T-cell (primary cell): ENCODE measurements at regions of chr3 and their contacts with region 1.

Region 1: DNA sequence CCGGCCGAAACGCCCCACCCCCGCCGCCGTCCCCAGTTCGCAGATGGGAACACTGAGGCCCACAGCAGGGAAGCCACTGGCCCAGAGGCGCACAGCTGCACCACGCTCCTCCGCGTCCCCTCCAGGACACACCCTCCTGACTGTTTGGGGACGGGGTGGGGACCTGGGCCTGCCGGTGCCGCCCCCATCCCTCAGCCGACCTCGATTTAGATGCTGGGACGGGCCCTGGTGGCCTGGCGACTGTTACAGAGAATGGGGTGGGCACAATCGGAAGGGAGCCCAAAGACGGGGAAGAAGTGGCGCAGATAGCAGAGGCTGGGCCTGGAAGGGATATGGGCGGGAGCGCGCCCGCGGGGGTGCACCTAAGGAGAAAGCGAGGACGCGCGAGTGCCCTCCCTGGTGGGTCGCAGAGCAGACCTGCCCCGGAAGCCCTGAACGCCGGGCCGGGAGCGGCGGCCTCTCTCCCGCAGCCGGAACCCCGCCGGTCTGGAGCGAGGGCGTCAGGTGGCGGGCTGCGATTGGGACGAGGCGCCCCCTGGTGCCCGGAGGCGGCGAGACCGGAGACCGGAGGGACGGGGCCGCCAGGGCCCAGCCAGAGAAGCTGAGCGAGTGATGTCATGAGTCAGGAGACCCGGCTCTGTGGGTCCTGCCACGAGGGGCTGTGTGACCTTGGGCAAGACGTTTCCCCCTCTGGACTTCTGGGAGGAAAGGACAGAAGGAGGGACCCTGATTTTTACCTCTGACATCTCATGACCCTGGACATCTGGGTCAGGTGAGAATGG is 78.4 kb downstream of the IQSEC1 start:
- DNase-seq: peak; percentile 64 to 91 (median 80)
- ATAC-seq: peak; percentile 83 to 93 (median 88)
- H3K4me3 ChIP-seq: peak overlapping the region; percentile 68 to 80
- H3K4me3 Mint-ChIP-seq: peak overlapping the region; percentile 92 to 93 (median 93)
- H3K27ac ChIP-seq: peak overlapping the region; percentile 64
- H3K27ac Mint-ChIP-seq: peak overlapping the region; percentile 87 to 94
- H3K4me1 ChIP-seq: peaks cover 0 to 61% of the 10 kb centered on the region in 2 experiments
- H3K4me1 Mint-ChIP-seq: peaks cover 53 to 74% (median 66%) of the 10 kb centered on the region in 3 donors
- H3K27me3 ChIP-seq: no peaks in the 10 kb centered on the region
- H3K27me3 Mint-ChIP-seq: no peaks in the 10 kb centered on the region

Region 2: DNA sequence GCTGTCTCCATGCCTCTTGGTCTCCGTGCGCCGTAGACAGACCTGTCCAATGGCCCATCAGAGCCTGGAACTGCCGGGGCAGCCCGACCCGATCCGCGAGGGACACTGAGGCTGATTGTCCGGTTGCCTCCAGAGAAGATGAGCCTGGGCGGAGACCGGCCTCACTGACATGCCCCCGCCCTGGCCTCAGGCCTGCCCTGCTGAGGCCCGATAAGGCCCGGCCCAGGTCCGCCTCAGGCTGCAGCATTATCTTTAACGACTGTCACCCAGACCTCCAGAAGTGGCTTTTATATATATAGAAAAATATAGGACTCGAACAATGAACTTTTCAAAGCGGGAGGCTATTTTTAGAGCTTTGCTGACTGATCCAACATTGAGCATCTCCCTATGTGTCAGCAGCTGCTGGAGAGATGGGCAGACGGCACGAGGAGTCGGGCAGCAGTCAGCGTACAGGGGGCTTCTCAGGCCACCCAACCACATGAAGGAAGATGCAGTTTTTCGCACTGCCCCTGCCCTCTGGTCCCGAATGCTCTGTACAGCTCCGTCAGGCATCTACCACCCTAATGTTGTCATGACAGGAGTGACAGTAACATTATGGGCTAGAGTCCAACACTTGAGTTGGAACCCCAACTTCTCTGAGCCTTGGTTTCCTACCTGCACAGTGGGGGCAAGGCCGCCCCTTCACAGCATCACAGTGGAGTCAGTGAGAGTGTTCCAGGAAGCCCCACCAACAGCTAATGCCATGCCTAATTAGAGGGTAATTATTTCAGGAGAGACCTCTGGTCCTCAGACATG is 41.4 kb before region 1 on chr3:
- CTCF ChIA-PET with region 1: no interaction called
- POLR2A ChIA-PET with region 1: no interaction called
- DNase-seq: no peak
- ATAC-seq: no peak
- H3K4me3 ChIP-seq: no peak overlapping the region
- H3K4me3 Mint-ChIP-seq: no peak overlapping the region
- H3K27ac ChIP-seq: no peak overlapping the region
- H3K27ac Mint-ChIP-seq: peak overlapping the region in 1 of 2 donors; percentile 12
- H3K4me1 ChIP-seq: peaks cover 0 to 99% of the 10 kb centered on the region in 2 experiments
- H3K4me1 Mint-ChIP-seq: peaks cover 69 to 82% (median 73%) of the 10 kb centered on the region in 3 donors
- H3K27me3 ChIP-seq: no peaks in the 10 kb centered on the region
- H3K27me3 Mint-ChIP-seq: no peaks in the 10 kb centered on the region

Region 3: GRCh38 chr3:12984023-12984823 is 10.6 kb before region 1 on chr3:
- CTCF ChIA-PET with region 1: interaction called, 3 to 10 read pairs
- POLR2A ChIA-PET with region 1: no interaction called
- DNase-seq: peak in 33 of 35 experiments; percentile 27 to 73 (median 49)
- ATAC-seq: peak; percentile 77 to 85 (median 78)
- H3K4me3 ChIP-seq: no peak overlapping the region
- H3K4me3 Mint-ChIP-seq: no peak overlapping the region
- H3K27ac ChIP-seq: no peak overlapping the region
- H3K27ac Mint-ChIP-seq: peak overlapping the region; percentile 19 to 52
- H3K4me1 ChIP-seq: peaks cover 6 to 67% of the 10 kb centered on the region in 2 experiments
- H3K4me1 Mint-ChIP-seq: peaks cover 72 to 77% (median 73%) of the 10 kb centered on the region in 3 donors
- H3K27me3 ChIP-seq: no peaks in the 10 kb centered on the region
- H3K27me3 Mint-ChIP-seq: no peaks in the 10 kb centered on the region

Region 4: DNA sequence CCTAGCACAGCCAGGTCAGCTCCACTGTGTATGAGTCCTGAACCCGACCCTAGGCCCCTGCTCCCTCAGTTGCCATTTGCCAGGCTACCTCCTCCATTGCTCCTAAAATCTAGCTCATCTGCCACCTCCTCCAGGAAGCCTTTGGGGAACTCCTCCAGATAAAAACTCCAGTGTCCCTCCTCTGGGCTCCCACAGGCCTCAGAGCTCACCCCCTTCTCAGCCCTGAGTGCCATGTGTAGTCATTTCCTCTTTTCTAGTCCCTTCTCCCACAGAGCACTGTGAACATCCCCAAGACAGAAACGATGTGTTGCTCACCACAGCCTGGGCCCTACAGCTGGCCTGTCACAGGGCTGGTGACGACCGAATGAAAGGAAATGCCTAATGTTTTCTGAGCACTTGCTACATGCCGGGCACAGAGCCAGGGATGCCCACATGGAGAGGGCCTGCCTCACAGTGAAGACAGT is 17.5 kb after region 1 on chr3:
- CTCF ChIA-PET with region 1: interaction called in 1 of 2 experiments, 11 read pairs
- POLR2A ChIA-PET with region 1: interaction called in 1 of 2 experiments, 3 read pairs
- DNase-seq: peak in 27 of 35 experiments; percentile 23 to 74 (median 36)
- ATAC-seq: no peak
- H3K4me3 ChIP-seq: peak overlapping the region in 1 of 2 donors; percentile 14
- H3K4me3 Mint-ChIP-seq: peak overlapping the region; percentile 62 to 89 (median 64)
- H3K27ac ChIP-seq: peak overlapping the region; percentile 100
- H3K27ac Mint-ChIP-seq: peak overlapping the region; percentile 99
- H3K4me1 ChIP-seq: peaks cover 75 to 100% of the 10 kb centered on the region in 2 experiments
- H3K4me1 Mint-ChIP-seq: peaks cover 81 to 90% (median 84%) of the 10 kb centered on the region in 3 donors
- H3K27me3 ChIP-seq: no peaks in the 10 kb centered on the region
- H3K27me3 Mint-ChIP-seq: no peaks in the 10 kb centered on the region

Region 5: GRCh38 chr3:13141991-13142412 is 147.2 kb after region 1 on chr3:
- CTCF ChIA-PET with region 1: no interaction called
- POLR2A ChIA-PET with region 1: no interaction called
- DNase-seq: peak in 8 of 35 experiments; percentile 3 to 20 (median 9)
- ATAC-seq: peak in 2 of 4 experiments; percentile 19 to 47
- H3K4me3 ChIP-seq: no peak overlapping the region
- H3K4me3 Mint-ChIP-seq: no peak overlapping the region
- H3K27ac ChIP-seq: no peak overlapping the region
- H3K27ac Mint-ChIP-seq: no peak overlapping the region
- H3K4me1 ChIP-seq: no peaks in the 10 kb centered on the region
- H3K4me1 Mint-ChIP-seq: no peaks in the 10 kb centered on the region
- H3K27me3 ChIP-seq: peaks cover 0 to 47% of the 10 kb centered on the region in 2 experiments
- H3K27me3 Mint-ChIP-seq: peaks cover 20 to 24% of the 10 kb centered on the region in 2 donors

Region 6: DNA sequence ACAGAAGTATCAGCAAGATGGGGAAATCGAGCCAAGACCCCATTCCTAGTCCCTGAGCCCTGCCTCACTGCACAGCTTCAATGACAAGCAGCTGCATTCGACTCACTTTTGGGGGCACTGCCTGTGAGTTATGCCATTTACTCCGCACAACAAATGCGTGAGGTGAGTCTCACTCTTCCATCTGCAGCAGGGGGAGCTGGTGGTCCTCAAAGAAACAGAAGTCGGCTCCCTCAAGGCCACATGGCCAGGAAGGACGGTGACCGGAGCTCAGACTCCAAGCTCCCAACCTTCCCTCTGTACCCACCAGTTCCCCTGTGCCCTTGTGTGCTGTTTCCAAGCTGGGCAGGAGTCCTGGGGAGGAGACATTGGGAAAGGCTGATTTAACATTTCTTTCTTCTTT is 206.1 kb after region 1 on chr3:
- CTCF ChIA-PET with region 1: no interaction called
- POLR2A ChIA-PET with region 1: no interaction called
- DNase-seq: peak in 1 of 35 experiments; percentile 15
- ATAC-seq: no peak
- H3K4me3 ChIP-seq: no peak overlapping the region
- H3K4me3 Mint-ChIP-seq: no peak overlapping the region
- H3K27ac ChIP-seq: no peak overlapping the region
- H3K27ac Mint-ChIP-seq: no peak overlapping the region
- H3K4me1 ChIP-seq: peaks cover 3 to 13% of the 10 kb centered on the region in 2 experiments
- H3K4me1 Mint-ChIP-seq: peaks cover 10 to 14% (median 11%) of the 10 kb centered on the region in 3 donors
- H3K27me3 ChIP-seq: peaks cover 4 to 68% of the 10 kb centered on the region in 2 experiments
- H3K27me3 Mint-ChIP-seq: peaks cover 33 to 43% of the 10 kb centered on the region in 2 donors